H1 (cell line): ENCODE measurements at regions of chr16 and their contacts with region 1.

Region 1: DNA sequence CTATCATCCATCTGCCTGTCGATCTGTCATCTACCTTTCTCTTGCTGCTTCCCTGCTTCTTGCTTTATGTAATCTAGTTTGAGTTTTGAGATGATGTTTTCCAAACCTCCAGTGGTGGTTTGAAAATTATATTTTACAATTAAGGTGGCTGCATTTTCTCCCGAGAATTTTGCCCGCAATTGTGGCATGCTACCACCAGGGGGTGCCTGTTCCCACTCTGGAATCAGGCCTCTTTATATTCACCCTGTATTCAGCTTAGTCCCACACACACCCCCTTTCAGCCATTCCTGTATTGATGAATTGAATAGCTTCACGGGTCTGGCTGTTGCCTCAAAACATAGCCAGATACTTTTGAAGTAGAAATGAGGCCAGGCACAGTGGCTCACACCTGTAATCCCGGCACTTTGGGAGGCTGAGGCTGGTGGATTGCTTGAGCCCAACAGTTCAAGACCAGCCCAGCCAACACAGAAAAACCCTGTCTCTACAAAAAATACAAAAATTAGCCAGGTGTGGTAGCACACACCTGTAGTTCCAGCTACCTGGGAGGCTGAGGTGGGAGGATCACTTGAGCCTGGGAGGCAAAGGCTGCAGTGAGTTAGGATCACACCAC is 3.2 kb downstream of the PRSS22 start:
- DNase-seq: peak in 1 of 2 experiments; percentile 80
- H3K4me3 ChIP-seq: no peak overlapping the region
- H3K27ac ChIP-seq: no peak overlapping the region
- H3K4me1 ChIP-seq: peaks cover 3 to 12% (median 6%) of the 10 kb centered on the region in 4 experiments; a peak in 5 of 7 replicates
- H3K27me3 ChIP-seq: peaks cover 2 to 21% (median 8%) of the 10 kb centered on the region in 4 experiments; a peak in 4 of 7 replicates
- CTCF ChIP-seq: peak; percentile 62 to 74 (median 65)
- EP300 ChIP-seq: no peak
- POLR2A ChIP-seq: no peak
- RAD21 ChIP-seq: peak; percentile 34 to 39

Region 2: GRCh38 chr16:2799866-2800239 is 55.0 kb before region 1 on chr16:
- CTCF ChIA-PET with region 1: no interaction called
- POLR2A ChIA-PET with region 1: no interaction called
- DNase-seq: no peak
- H3K4me3 ChIP-seq: no peak overlapping the region
- H3K27ac ChIP-seq: no peak overlapping the region
- H3K4me1 ChIP-seq: no peaks in the 10 kb centered on the region
- H3K27me3 ChIP-seq: no peaks in the 10 kb centered on the region
- CTCF ChIP-seq: no peak
- EP300 ChIP-seq: no peak
- POLR2A ChIP-seq: no peak
- RAD21 ChIP-seq: no peak

Region 3: GRCh38 chr16:2829501-2830356 is 25.1 kb before region 1 on chr16 and contains the start of gene ZG16B:
- CTCF ChIA-PET with region 1: interaction called, 14 read pairs
- POLR2A ChIA-PET with region 1: no interaction called
- DNase-seq: no peak
- H3K4me3 ChIP-seq: no peak within 1 kb of the TSS
- H3K27ac ChIP-seq: no peak within 1 kb of the TSS
- H3K4me1 ChIP-seq: no peaks in the 10 kb centered on the region
- H3K27me3 ChIP-seq: no peaks in the 10 kb centered on the region
- CTCF ChIP-seq: no peak
- EP300 ChIP-seq: no peak
- POLR2A ChIP-seq: no peak
- RAD21 ChIP-seq: no peak
- total RNA-seq, gene ZG16B: not detected in 2 replicates

Region 4: GRCh38 chr16:2867987-2868789 is 13.4 kb after region 1 on chr16:
- CTCF ChIA-PET with region 1: interaction called, 25 read pairs
- POLR2A ChIA-PET with region 1: interaction called, 4 read pairs
- DNase-seq: peak; percentile 83 to 99
- H3K4me3 ChIP-seq: peak overlapping the region; percentile 29 to 61 (median 57)
- H3K27ac ChIP-seq: peak overlapping the region; percentile 58; the same call in 1 of the 2 replicates
- H3K4me1 ChIP-seq: no peaks in the 10 kb centered on the region
- H3K27me3 ChIP-seq: peaks cover 7 to 40% (median 32%) of the 10 kb centered on the region in 4 experiments
- CTCF ChIP-seq: peak; percentile 89 to 98 (median 94)
- EP300 ChIP-seq: no peak
- POLR2A ChIP-seq: peak in 1 of 2 experiments; percentile 83; a peak in 2 of 3 replicates
- RAD21 ChIP-seq: peak; percentile 91 to 94

Region 5: DNA sequence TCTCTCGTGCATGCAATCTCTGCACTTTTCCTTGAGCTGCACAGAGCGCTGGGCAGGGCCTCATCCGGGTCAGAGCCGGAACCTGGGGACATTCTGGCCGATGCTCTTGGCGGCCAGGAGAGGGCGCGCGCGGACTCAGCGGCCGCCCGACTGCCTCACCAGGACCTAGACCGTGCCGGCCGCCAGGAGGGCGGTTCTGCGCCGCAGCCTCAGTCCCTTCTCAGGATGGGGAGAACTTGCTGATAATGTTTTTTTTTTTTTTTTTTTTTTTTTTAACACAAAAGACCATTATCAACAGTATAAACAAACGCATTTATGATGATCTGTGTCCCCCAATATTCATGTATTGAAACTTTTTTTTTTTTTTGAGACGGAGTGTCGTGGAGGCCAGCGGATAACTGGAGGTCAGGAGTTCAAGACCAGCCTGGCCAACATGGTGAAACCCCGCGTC is 20.1 kb after region 1 on chr16:
- CTCF ChIA-PET with region 1: interaction called, 25 read pairs
- POLR2A ChIA-PET with region 1: interaction called, 4 read pairs
- DNase-seq: peak in 1 of 2 experiments; percentile 76
- H3K4me3 ChIP-seq: no peak overlapping the region
- H3K27ac ChIP-seq: no peak overlapping the region
- H3K4me1 ChIP-seq: no peaks in the 10 kb centered on the region; a peak in 1 of 7 replicates
- H3K27me3 ChIP-seq: peaks cover 0 to 3% (median 2%) of the 10 kb centered on the region in 4 experiments; a peak in 4 of 7 replicates
- CTCF ChIP-seq: peak; percentile 92 to 98 (median 93)
- EP300 ChIP-seq: no peak
- POLR2A ChIP-seq: no peak
- RAD21 ChIP-seq: peak; percentile 62 to 75

Region 6: DNA sequence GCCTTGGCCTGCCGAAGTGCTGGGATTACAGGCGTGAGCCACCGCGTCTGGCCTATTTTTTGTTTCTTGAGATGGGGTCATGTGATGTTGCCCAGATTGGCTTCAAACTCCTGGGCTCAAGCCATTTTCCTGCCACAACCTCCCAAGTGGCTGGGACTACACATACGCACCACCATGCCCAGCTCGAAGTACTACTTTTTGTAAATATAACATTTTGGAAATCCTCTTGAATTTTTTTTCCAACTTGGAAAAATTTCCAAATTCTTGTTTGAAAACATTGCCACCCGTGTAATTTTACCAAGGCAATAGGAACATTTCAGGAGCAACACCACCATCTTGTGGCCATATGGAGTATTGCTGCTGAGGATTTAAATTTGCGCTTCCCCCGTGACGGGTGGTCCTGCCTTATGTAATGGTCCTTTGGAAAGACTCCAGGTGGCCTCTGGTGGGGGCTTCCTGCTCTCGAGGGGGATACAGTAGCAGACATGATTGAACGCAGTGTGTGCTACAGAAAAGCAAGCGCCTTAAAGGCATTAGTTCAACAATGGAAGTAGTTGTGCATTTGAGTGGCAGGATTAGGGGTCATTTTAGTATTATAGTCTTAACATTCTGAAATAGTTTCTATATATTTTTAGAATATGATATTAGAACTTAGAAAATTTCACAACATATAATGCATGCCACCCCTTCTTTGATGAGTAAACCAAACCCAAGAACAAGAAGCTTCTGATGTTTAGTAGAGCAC is 64.9 kb after region 1 on chr16:
- CTCF ChIA-PET with region 1: interaction called, 11 read pairs
- POLR2A ChIA-PET with region 1: no interaction called
- DNase-seq: peak in 1 of 2 experiments; percentile 83
- H3K4me3 ChIP-seq: no peak overlapping the region
- H3K27ac ChIP-seq: no peak overlapping the region
- H3K4me1 ChIP-seq: peaks cover 0 to 2% (median under 1%) of the 10 kb centered on the region in 4 experiments; a peak in 3 of 7 replicates
- H3K27me3 ChIP-seq: no peaks in the 10 kb centered on the region
- CTCF ChIP-seq: peak; percentile 55 to 85 (median 76)
- EP300 ChIP-seq: no peak
- POLR2A ChIP-seq: no peak
- RAD21 ChIP-seq: peak; percentile 83 to 84